Dorsolateral prefrontal cortex (tissue), 120 donors: ENCODE measurements at regions of chr2 and their contacts with region 1.

Region 1: DNA sequence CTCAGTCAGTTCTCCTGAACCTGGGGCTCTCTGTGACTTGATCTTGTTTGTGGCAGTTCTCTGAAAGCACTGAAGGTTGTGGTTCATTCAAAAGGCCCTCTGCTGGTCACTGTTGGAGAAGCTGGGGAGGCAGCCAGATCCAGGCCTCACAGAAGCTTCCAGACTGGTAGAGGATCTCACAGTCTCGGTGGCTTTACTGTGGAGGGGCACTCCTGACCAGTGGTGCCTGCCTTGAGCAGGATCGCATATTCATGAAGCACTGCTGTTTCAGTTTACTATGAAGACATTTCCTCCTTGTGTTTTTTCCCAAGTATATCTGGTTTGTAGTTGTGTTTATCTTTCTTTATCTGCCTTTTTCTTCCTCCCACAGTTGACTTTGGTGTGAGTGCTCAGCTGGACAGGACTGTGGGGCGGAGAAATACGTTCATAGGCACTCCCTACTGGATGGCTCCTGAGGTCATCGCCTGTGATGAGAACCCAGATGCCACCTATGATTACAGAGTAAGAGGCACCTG is 133.9 kb downstream of the MAP4K4 start:
- DNase-seq: peak; percentile 62 to 88 (median 78)
- H3K4me3 ChIP-seq: peak overlapping the region in 1 of 59 donors; percentile 3
- H3K27ac ChIP-seq: peak overlapping the region; percentile 1 to 98 (median 90)
- H3K27me3 ChIP-seq: no peaks in the 10 kb centered on the region
- CTCF ChIP-seq: peak; percentile 43 to 94 (median 84)

Region 2: GRCh38 chr2:101419096-101419663 is 412.2 kb before region 1 on chr2:
- intact Hi-C with region 1: loop called in 1 of 2 experiments (anchors 5 kb)
- DNase-seq: peak in 3 of 10 donors; percentile 12 to 63 (median 36)
- H3K4me3 ChIP-seq: no peak overlapping the region
- H3K27ac ChIP-seq: no peak overlapping the region
- H3K27me3 ChIP-seq: no peaks in the 10 kb centered on the region
- CTCF ChIP-seq: peak; percentile 54 to 82 (median 69)

Region 3: GRCh38 chr2:101518578-101519492 is 312.6 kb before region 1 on chr2:
- intact Hi-C with region 1: loop called (anchors 5 kb)
- DNase-seq: peak; percentile 41 to 70 (median 64)
- H3K4me3 ChIP-seq: peak overlapping the region in 41 of 59 donors; percentile 1 to 57 (median 33)
- H3K27ac ChIP-seq: peak overlapping the region in 35 of 59 donors; percentile 1 to 77 (median 54)
- H3K27me3 ChIP-seq: no peaks in the 10 kb centered on the region
- CTCF ChIP-seq: peak in 53 of 56 donors; percentile 31 to 76 (median 58)

Region 4: DNA sequence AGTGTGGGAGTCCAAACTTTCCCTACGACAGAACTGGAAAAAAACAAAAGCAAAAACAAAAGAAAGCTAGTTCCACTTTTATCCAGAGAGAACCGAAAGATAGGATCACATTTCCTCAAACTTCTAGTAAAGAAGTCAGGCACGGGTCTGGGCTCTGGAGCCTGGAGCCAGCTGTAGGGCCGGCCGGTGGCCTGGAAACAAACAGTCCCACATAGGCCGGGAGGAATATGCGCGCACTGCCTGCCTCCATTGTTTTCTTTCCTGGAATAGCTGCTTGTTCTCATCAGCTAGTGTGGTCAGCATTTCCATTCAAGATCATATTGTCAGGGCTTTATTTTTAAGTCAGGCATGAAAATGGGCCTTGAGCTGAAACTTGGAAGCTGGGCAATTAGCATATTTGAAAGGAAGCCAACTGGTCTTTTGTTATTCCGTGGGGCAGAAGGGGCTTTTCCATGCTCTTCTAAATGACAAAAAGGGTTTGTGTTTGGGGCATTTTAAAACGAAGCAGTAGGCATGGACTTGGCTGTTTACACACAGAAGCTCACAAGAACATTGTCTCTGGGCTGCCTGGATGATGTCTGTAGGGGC is 297.8 kb before region 1 on chr2:
- intact Hi-C with region 1: loop called in 1 of 2 experiments (anchors 5 kb)
- DNase-seq: peak in 9 of 10 donors; percentile 70 to 93 (median 87)
- H3K4me3 ChIP-seq: peak overlapping the region in 40 of 59 donors; percentile 2 to 53 (median 21)
- H3K27ac ChIP-seq: peak overlapping the region; percentile 71 to 99 (median 96)
- H3K27me3 ChIP-seq: no peaks in the 10 kb centered on the region
- CTCF ChIP-seq: peak in 6 of 56 donors; percentile 10 to 32 (median 20)

Region 5: GRCh38 chr2:101619191-101619591 is 212.2 kb before region 1 on chr2:
- intact Hi-C with region 1: loop called in 1 of 2 experiments (anchors 5 kb)
- DNase-seq: no peak
- H3K4me3 ChIP-seq: no peak overlapping the region
- H3K27ac ChIP-seq: no peak overlapping the region
- H3K27me3 ChIP-seq: no peaks in the 10 kb centered on the region
- CTCF ChIP-seq: no peak

Region 6: GRCh38 chr2:101776172-101777043 is 55.0 kb before region 1 on chr2:
- intact Hi-C with region 1: loop called in 1 of 2 experiments (anchors 5 kb)
- DNase-seq: no peak
- H3K4me3 ChIP-seq: peak overlapping the region in 5 of 59 donors; percentile 2 to 10 (median 8)
- H3K27ac ChIP-seq: peak overlapping the region in 53 of 59 donors; percentile 9 to 93 (median 81)
- H3K27me3 ChIP-seq: no peaks in the 10 kb centered on the region
- CTCF ChIP-seq: peak in 32 of 56 donors; percentile 2 to 54 (median 28)